HEK293 (cell line): ENCODE measurements at regions of chr20 and their contacts with region 1.

Region 1: DNA sequence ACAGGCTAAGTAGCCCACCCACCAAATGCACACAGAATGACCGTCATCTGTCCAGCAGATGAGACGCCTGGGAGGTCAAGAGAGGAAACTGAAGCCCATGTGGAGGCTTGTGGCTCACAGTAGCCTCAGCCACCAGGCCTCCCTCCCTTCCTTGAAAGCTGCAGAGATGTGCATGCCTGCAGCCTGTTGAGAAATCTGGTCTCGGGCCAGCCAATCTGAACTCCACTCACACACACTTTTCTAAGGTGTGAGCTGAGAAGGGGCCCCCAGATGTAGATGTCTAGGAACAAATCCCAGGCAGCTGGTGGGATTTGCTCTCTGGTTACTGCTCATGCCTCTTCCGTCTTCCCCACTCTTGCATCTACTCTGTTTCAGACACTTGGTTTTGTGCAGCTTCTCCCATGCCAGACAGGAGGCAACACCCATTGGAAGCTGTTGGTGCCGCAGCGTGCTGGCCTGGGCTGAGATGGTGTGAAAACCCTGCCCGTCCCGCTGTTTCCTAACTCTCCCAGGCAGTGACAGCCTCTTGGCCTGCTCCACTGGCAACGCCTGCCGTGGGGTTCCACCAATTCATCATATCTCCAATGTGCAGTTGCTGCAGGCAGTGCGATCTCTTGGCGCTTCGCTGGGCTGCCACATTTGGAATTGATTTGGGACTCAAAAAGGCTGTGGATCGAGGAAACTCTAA is 24.1 kb upstream of the PAX1 start:
- H3K4me3 ChIP-seq: no peak overlapping the region
- H3K27ac ChIP-seq: no peak overlapping the region
- H3K4me1 ChIP-seq: peaks cover 4% of the 10 kb centered on the region; the same call in 1 of the 2 replicates
- CTCF ChIP-seq: no peak

Region 2: DNA sequence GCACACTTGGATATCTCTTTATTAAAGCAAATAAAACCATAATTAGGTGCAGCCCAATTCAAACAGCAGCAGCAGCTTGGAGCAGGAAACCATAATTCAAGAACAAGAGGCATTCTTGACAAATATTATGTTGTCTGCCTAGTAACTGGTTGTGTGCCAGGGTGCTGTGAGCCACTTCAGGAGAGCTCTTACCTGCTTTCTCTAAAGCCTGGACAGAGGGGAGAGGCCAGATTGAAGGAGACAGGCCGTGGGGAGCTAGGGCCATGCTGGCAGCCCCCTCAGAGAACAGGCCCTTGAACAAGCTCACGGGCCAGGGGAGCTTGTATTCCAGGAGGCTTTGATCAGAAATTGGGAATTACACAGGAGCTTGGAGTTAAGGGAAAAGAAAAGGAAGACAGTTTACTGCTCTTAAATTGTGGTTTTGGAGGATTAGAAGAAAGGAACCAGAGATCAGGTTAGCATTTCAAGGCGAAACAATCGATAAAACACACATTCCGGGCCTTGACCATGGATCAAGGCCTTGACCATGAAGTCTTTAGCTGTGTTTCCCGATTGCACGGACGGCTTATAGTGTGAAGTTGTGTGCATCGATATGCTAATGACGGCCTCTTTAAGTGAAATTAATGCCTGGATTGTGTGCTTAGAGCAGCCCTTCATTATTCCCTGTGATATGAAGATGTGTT is 97.8 kb before region 1 on chr20:
- CTCF ChIA-PET with region 1: no interaction called
- POLR2A ChIA-PET with region 1: no interaction called
- H3K4me3 ChIP-seq: no peak overlapping the region
- H3K27ac ChIP-seq: no peak overlapping the region
- H3K4me1 ChIP-seq: no peaks in the 10 kb centered on the region
- CTCF ChIP-seq: no peak

Region 3: GRCh38 chr20:21702553-21703470 is 21.4 kb after region 1 on chr20:
- CTCF ChIA-PET with region 1: interaction called, 28 read pairs
- POLR2A ChIA-PET with region 1: no interaction called
- H3K4me3 ChIP-seq: peak overlapping the region; percentile 28
- H3K27ac ChIP-seq: no peak overlapping the region
- H3K4me1 ChIP-seq: 0 out of 2 replicates have a peak, but pooled peaks cover 2% of the 10 kb centered on the region
- CTCF ChIP-seq: no peak

Region 4: GRCh38 chr20:21804802-21805201 is 123.4 kb after region 1 on chr20:
- CTCF ChIA-PET with region 1: no interaction called
- POLR2A ChIA-PET with region 1: no interaction called
- H3K4me3 ChIP-seq: no peak overlapping the region
- H3K27ac ChIP-seq: no peak overlapping the region
- H3K4me1 ChIP-seq: no peaks in the 10 kb centered on the region
- CTCF ChIP-seq: no peak